Activated naive CD4-positive, alpha-beta T cell treated with anti-CD3 and anti-CD28 coated beads for 36 hours (primary cell): ENCODE measurements at regions of chr1 and their contacts with region 1.

Region 1: GRCh38 chr1:15741183-15741850 is 982 bp upstream of the TMEM82 start:
- DNase-seq: peak; percentile 87
- H3K4me3 Mint-ChIP-seq: no peak overlapping the region
- H3K27ac Mint-ChIP-seq: no peak overlapping the region
- H3K4me1 Mint-ChIP-seq: peaks cover 5% of the 10 kb centered on the region
- H3K27me3 Mint-ChIP-seq: no peaks in the 10 kb centered on the region

Region 2: GRCh38 chr1:15430787-15431570 is 310.3 kb before region 1 on chr1:
- CTCF ChIA-PET with region 1: no interaction called
- intact Hi-C with region 1: loop called (anchors 5 kb)
- DNase-seq: peak; percentile 83
- H3K4me3 Mint-ChIP-seq: no peak overlapping the region
- H3K27ac Mint-ChIP-seq: no peak overlapping the region
- H3K4me1 Mint-ChIP-seq: no peaks in the 10 kb centered on the region
- H3K27me3 Mint-ChIP-seq: no peaks in the 10 kb centered on the region

Region 3: GRCh38 chr1:15595809-15596617 is 145.3 kb before region 1 on chr1:
- CTCF ChIA-PET with region 1: interaction called, 6 read pairs
- intact Hi-C with region 1: loop called (anchors 1 kb)
- DNase-seq: no peak
- H3K4me3 Mint-ChIP-seq: no peak overlapping the region
- H3K27ac Mint-ChIP-seq: no peak overlapping the region
- H3K4me1 Mint-ChIP-seq: no peaks in the 10 kb centered on the region
- H3K27me3 Mint-ChIP-seq: no peaks in the 10 kb centered on the region

Region 4: DNA sequence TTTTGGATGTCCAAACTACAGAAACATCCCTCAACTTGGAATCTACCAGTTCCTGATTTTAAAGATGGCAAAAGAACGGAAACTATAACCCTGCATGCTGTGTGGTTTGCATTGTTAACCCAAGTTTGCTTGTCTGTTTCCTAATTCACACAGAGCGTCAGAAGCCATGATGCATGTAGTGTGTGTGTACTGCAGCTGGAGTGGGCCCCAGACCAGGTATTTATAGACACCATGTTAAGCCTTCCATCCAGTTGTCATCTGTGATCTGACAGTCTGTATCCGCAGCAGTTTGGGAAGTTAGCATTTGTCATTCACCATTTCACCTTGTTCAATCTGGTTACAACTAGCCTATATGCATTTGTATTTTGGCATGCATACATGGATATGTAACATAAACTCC is 84.9 kb before region 1 on chr1:
- CTCF ChIA-PET with region 1: no interaction called
- intact Hi-C with region 1: loop called (anchors 5 kb)
- DNase-seq: no peak
- H3K4me3 Mint-ChIP-seq: no peak overlapping the region
- H3K27ac Mint-ChIP-seq: no peak overlapping the region
- H3K4me1 Mint-ChIP-seq: no peaks in the 10 kb centered on the region
- H3K27me3 Mint-ChIP-seq: no peaks in the 10 kb centered on the region

Region 5: GRCh38 chr1:15663925-15664324 is 77.4 kb before region 1 on chr1:
- CTCF ChIA-PET with region 1: interaction called, 10 read pairs
- intact Hi-C with region 1: loop called (anchors 5 kb)
- DNase-seq: no peak
- H3K4me3 Mint-ChIP-seq: no peak overlapping the region
- H3K27ac Mint-ChIP-seq: no peak overlapping the region
- H3K4me1 Mint-ChIP-seq: no peaks in the 10 kb centered on the region
- H3K27me3 Mint-ChIP-seq: no peaks in the 10 kb centered on the region

Region 6: GRCh38 chr1:15714406-15715136 is 26.7 kb before region 1 on chr1:
- CTCF ChIA-PET with region 1: no interaction called
- intact Hi-C with region 1: no loop called
- DNase-seq: no peak
- H3K4me3 Mint-ChIP-seq: no peak overlapping the region
- H3K27ac Mint-ChIP-seq: no peak overlapping the region
- H3K4me1 Mint-ChIP-seq: peaks cover 4% of the 10 kb centered on the region
- H3K27me3 Mint-ChIP-seq: no peaks in the 10 kb centered on the region

Region 7: GRCh38 chr1:15724923-15725880 is 16.1 kb before region 1 on chr1:
- CTCF ChIA-PET with region 1: no interaction called
- intact Hi-C with region 1: no loop called
- DNase-seq: no peak
- H3K4me3 Mint-ChIP-seq: no peak overlapping the region
- H3K27ac Mint-ChIP-seq: no peak overlapping the region
- H3K4me1 Mint-ChIP-seq: no peaks in the 10 kb centered on the region
- H3K27me3 Mint-ChIP-seq: no peaks in the 10 kb centered on the region

Region 8: DNA sequence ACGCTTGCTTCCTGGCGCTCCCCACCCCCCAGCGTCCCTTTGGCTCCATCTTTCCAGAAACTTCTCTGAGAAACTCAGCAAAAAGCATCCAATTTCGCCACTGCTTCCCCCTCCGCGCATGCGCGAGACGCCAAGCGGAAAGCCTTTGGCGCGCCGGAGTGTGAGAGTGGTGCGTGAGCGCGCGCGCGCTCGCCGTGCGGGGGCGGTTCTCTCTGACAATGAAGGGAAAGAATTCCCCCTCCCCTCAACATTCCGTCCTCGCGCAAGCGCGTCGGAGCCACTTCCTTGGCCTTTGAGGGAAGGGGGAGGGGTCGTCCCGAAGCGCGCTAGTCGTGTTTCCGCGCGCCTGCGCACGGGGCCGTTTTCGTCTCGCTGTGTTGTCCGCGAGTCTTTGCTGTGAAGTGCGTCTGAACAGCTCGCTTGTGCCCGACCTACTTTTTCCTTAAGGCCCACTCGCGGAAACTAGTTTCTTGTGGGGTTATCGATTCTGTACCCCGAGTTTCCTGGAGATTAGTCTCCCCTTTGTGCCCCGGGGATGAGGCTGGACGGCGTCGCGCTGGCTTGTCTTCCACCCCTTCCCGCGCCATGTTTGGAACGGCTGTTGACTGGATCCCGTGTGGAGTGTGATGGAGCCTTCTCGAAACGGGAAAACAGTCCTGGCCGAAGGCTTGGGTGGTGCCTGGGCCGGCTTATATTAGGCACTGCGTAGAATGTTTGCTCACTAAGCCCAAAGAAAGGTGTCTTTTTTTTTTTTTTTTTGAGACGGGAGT is 94.6 kb after region 1 on chr1:
- CTCF ChIA-PET with region 1: no interaction called
- intact Hi-C with region 1: no loop called
- DNase-seq: peak; percentile 100
- H3K4me3 Mint-ChIP-seq: peak overlapping the region; percentile 86
- H3K27ac Mint-ChIP-seq: peak overlapping the region; percentile 95
- H3K4me1 Mint-ChIP-seq: peaks cover 27% of the 10 kb centered on the region
- H3K27me3 Mint-ChIP-seq: no peaks in the 10 kb centered on the region